A673 (cell line): ENCODE measurements at regions of chr7 and their contacts with region 1.

Region 1: GRCh38 chr7:139976838-139977656 is 85.7 kb downstream of the PARP12 start:
- DNase-seq: no peak
- H3K4me3 ChIP-seq: no peak overlapping the region
- H3K27ac ChIP-seq: no peak overlapping the region
- H3K4me1 ChIP-seq: no peaks in the 10 kb centered on the region
- H3K27me3 ChIP-seq: no peaks in the 10 kb centered on the region
- CTCF ChIP-seq: no peak

Region 2: DNA sequence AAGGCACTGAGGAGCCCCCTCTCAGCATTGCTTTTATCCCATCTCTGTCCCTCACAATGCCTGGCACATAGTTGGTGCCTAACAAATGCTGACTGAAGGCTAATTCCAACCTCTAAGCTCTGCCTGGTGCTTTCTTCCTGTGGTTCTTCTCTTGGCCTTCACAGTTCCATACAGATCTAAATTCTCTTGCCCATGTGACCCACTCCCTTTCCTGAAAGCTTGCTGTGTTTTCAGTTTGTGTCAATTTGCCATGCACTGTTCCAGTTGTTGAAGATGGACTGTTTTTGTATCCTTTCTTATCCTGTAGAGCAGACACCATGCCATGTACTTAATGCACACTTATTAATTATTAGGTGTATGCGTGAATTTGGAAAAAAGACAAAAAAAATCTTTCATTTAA is 138.8 kb before region 1 on chr7:
- CTCF ChIA-PET with region 1: interaction called, 10 read pairs
- POLR2A ChIA-PET with region 1: no interaction called
- intact Hi-C with region 1: no loop called
- DNase-seq: no peak
- H3K4me3 ChIP-seq: no peak overlapping the region
- H3K27ac ChIP-seq: no peak overlapping the region
- H3K4me1 ChIP-seq: no peaks in the 10 kb centered on the region
- H3K27me3 ChIP-seq: no peaks in the 10 kb centered on the region
- CTCF ChIP-seq: no peak